Gastrocnemius medialis (tissue), 4 donors: ENCODE measurements at regions of chr5 and their contacts with region 1.

Region 1: GRCh38 chr5:118987988-118988865 is at the start of gene DTWD2:
- DNase-seq: peak; percentile 78 to 87
- ATAC-seq: peak; percentile 97 to 98
- H3K4me3 ChIP-seq: peak within 1 kb of the TSS; percentile 67 to 91 (median 85)
- H3K27ac ChIP-seq: peak within 1 kb of the TSS; percentile 83 to 96 (median 95)
- H3K4me1 ChIP-seq: peaks cover 15 to 20% of the 10 kb centered on the region in 2 donors
- H3K27me3 ChIP-seq: no peaks in the 10 kb centered on the region
- CTCF ChIP-seq: peak; percentile 90 to 97 (median 91)
- POLR2A ChIP-seq: peak in 1 of 2 donors; percentile 26
- total RNA-seq, gene DTWD2: 2.5 to 19.2 (median 8.0) TPM

Region 2: DNA sequence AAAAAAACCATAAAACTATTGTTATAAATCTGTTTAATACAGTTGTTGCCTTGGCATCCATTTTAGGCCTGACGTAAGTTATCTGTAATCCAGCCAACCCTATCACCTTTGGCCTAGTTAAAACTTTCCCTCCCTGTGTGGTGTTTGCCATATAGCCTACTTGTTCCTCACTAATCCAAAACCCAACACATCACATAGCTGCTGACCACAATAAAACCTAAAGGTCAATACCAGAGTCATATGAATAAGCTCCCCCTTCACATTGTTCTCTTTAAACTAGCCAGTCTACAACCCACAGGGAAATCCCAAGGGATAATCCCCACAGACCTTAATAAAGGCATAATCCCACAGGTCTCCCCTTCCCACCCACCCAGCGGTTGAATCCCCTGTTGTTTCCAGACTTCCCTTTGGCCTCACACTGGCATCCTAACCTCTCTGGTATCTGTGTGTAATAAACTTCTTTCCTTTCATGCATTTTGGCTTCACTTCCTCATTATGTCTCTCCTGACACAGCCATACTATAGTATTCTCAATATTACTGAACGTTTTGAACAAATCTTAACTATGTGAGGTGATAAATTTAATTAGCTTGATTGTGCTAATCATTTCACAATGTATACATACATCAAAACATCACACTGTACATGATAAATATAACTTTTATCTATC is 50.7 kb before region 1 on chr5:
- in situ Hi-C with region 1: no loop called
- intact Hi-C with region 1: no loop called
- DNase-seq: no peak
- ATAC-seq: no peak
- H3K4me3 ChIP-seq: no peak overlapping the region
- H3K27ac ChIP-seq: no peak overlapping the region
- H3K4me1 ChIP-seq: peaks cover 0 to 3% of the 10 kb centered on the region in 2 donors
- H3K27me3 ChIP-seq: no peaks in the 10 kb centered on the region
- CTCF ChIP-seq: no peak
- POLR2A ChIP-seq: no peak

Region 3: GRCh38 chr5:119070828-119071572 is 82.8 kb after region 1 on chr5 and contains the start of gene DMXL1:
- in situ Hi-C with region 1: no loop called
- intact Hi-C with region 1: loop called (anchors 1 kb)
- DNase-seq: peak; percentile 99
- ATAC-seq: peak; percentile 95 to 97
- H3K4me3 ChIP-seq: peak within 1 kb of the TSS; percentile 73 to 91 (median 88)
- H3K27ac ChIP-seq: peak within 1 kb of the TSS; percentile 91 to 99 (median 96)
- H3K4me1 ChIP-seq: peaks cover 21 to 32% of the 10 kb centered on the region in 2 donors
- H3K27me3 ChIP-seq: no peaks in the 10 kb centered on the region
- CTCF ChIP-seq: peak in 1 of 5 experiments; percentile 25
- POLR2A ChIP-seq: peak; percentile 76 to 83
- total RNA-seq, gene DMXL1: 17.8 to 31.1 (median 24.3) TPM

Region 4: GRCh38 chr5:119220576-119221197 is 232.5 kb after region 1 on chr5:
- in situ Hi-C with region 1: loop called in 1 of 4 experiments (anchors 25 kb)
- intact Hi-C with region 1: no loop called
- DNase-seq: no peak
- ATAC-seq: no peak
- H3K4me3 ChIP-seq: no peak overlapping the region
- H3K27ac ChIP-seq: no peak overlapping the region
- H3K4me1 ChIP-seq: no peaks in the 10 kb centered on the region
- H3K27me3 ChIP-seq: no peaks in the 10 kb centered on the region
- CTCF ChIP-seq: no peak
- POLR2A ChIP-seq: no peak

Region 5: GRCh38 chr5:119255571-119256356 is 267.5 kb after region 1 on chr5:
- in situ Hi-C with region 1: loop called in 3 of 4 experiments (anchors 10 to 25 kb)
- intact Hi-C with region 1: no loop called
- DNase-seq: no peak
- ATAC-seq: no peak
- H3K4me3 ChIP-seq: no peak overlapping the region
- H3K27ac ChIP-seq: no peak overlapping the region
- H3K4me1 ChIP-seq: no peaks in the 10 kb centered on the region
- H3K27me3 ChIP-seq: no peaks in the 10 kb centered on the region
- CTCF ChIP-seq: no peak
- POLR2A ChIP-seq: no peak

Region 6: GRCh38 chr5:119267958-119268386 is 279.7 kb after region 1 on chr5:
- in situ Hi-C with region 1: loop called in 2 of 4 experiments (anchors 25 kb)
- intact Hi-C with region 1: loop called (anchors 1 kb)
- DNase-seq: peak; percentile 80 to 89
- ATAC-seq: peak; percentile 97 to 98
- H3K4me3 ChIP-seq: peak overlapping the region; percentile 68 to 96 (median 84)
- H3K27ac ChIP-seq: peak overlapping the region; percentile 81 to 88 (median 86)
- H3K4me1 ChIP-seq: peaks cover 4 to 5% of the 10 kb centered on the region in 2 donors
- H3K27me3 ChIP-seq: no peaks in the 10 kb centered on the region
- CTCF ChIP-seq: peak in 3 of 5 experiments; percentile 21 to 56 (median 55)
- POLR2A ChIP-seq: no peak

Region 7: DNA sequence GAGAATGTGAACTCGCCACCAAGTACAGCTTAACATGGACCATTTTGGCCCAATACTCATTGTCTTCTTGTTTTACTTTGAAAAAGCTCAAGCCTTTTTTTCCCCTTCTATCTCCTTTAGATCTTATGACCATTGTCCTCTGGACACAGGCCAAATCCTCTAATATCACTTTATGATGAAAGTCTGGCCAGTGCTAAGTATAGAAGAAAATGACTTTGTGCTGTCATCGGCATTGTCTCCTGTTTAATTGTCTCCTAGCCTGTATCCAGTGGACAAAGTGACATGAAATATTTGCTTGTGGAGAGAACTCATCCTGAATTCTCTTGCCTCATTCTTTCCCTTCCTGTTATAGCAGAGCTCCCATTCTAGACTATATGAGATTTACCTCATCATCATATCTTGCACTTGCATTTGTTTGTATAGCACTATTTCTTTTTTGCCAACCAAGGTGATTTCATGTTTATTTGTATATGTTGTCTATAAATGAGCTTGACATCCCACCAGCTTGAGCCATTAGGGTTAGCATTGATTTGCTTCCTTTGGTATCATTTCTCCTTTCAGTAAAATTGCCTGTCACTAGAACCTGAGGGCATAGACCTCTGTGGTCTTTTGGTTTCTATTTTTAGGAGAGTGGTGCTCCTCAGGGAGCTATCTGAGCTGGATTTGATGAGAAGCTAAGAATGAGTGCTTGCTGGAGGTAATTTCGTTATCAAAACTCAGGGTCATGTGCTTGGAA is 348.8 kb after region 1 on chr5:
- in situ Hi-C with region 1: no loop called
- intact Hi-C with region 1: loop called (anchors 5 kb)
- DNase-seq: no peak
- ATAC-seq: no peak
- H3K4me3 ChIP-seq: no peak overlapping the region
- H3K27ac ChIP-seq: no peak overlapping the region
- H3K4me1 ChIP-seq: peaks cover 3 to 6% of the 10 kb centered on the region in 2 donors
- H3K27me3 ChIP-seq: no peaks in the 10 kb centered on the region
- CTCF ChIP-seq: no peak
- POLR2A ChIP-seq: no peak

Region 8: DNA sequence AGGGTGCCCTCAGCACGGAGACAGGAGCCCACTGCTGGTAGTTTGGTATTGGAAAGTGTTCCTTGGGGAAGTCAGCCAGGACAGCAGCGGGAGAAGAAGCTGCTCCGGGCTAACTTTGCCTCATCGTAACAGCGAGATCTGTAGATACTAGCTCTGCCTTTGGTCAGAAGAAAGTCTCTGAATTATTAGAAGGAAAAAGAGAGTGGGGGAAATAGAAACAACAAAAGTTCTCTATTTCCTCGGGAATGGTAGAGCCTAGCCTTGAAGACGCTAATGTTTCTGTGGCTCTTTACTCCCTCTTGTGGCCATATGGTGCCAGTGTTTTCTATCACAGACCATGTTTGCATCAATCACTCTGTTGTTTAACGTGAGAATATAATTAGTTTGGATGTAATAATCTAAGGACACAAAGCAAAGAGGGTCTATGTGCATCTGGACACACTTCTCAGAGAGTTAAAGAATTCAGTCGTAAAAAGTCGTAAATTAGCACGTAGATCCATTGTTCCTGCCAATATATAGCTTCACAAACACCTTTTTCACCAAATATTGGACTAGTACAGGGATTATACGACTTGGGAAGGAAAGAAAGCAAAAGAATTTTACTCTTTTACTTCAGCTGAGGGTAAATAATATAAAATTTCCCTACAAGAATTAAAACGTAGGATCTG is 423.8 kb after region 1 on chr5:
- in situ Hi-C with region 1: loop called (anchors 5 to 25 kb)
- intact Hi-C with region 1: loop called (anchors 1 kb)
- DNase-seq: peak; percentile 7 to 29
- ATAC-seq: peak; percentile 91 to 99
- H3K4me3 ChIP-seq: peak overlapping the region; percentile 59 to 67 (median 62)
- H3K27ac ChIP-seq: peak overlapping the region in 2 of 4 donors; percentile 10 to 38
- H3K4me1 ChIP-seq: peaks cover 0 to 5% of the 10 kb centered on the region in 2 donors
- H3K27me3 ChIP-seq: no peaks in the 10 kb centered on the region
- CTCF ChIP-seq: peak; percentile 82 to 93 (median 83)
- POLR2A ChIP-seq: no peak

Region 9: DNA sequence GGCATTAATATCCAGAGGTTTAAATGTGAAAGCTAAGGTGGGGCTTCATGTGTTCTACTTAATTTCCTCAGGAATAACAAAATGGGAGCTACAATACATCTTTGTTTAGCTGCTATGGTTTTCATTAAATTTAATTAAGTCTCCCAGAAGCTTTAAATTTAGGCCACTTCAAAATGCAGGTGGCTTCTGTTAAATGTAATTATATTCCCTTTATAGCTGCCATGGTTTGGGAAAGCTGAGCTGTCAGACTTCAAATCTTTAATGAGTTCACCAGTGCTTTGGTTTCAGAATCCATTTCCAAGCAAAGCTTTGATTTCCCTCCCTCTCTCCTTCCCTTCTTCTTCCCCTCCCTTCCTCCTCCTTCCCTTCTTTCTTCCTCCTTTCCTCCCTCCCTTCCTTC is 582.7 kb after region 1 on chr5:
- in situ Hi-C with region 1: no loop called
- intact Hi-C with region 1: no loop called
- DNase-seq: no peak
- ATAC-seq: no peak
- H3K4me3 ChIP-seq: no peak overlapping the region
- H3K27ac ChIP-seq: no peak overlapping the region
- H3K4me1 ChIP-seq: no peaks in the 10 kb centered on the region
- H3K27me3 ChIP-seq: no peaks in the 10 kb centered on the region
- CTCF ChIP-seq: no peak
- POLR2A ChIP-seq: no peak